ENCODE measurements at regions of chr1 and their contacts with region 1.

Region 1: GRCh38 chr1:173269490-173270230 is 62.5 kb upstream of the TNFSF4 start:
- DNase-seq: peak; percentile 100
- ATAC-seq: peak; percentile 94
- H3K4me3 ChIP-seq: peak overlapping the region; percentile 3; the same call in 1 of the 2 replicates
- H3K27ac ChIP-seq: peak overlapping the region; percentile 62
- H3K4me1 ChIP-seq: peaks cover 46% of the 10 kb centered on the region
- H3K27me3 ChIP-seq: no peaks in the 10 kb centered on the region
- CTCF ChIP-seq: no peak

Region 2: DNA sequence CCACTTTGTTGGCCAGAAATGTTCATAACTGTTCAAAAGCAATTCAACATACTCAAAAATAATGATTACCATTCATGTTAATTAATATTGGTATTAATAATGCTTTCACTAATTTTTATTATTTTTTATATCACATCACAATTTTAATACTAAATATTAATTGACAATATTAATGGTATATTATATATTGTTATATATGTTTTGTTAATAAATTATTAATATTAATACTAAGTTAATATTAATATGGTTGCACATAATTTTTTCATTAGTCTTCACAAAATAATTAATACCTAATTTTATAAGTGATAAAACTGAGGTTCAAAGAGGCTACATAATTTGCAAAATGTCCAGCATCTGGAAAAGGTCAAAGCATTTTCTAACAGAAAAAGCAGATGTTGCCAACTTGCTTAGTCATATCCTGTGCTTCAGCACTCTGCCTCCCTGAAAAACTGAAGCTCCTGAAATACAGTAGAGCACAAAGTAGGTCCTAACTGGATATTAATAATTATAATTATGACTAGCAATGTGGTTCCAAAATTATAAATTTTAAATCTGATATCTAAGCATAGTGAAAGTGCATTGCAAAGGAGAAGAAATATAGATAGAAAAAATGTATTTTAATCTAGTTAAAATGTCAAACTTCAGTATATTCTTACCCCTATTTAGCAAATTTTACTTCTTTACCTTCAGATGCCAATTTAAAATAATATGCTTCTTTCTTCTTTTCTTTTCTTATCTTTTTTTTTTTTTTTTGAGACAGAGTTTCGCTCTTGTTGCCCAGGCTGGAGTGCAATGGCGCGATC is 60.7 kb after region 1 on chr1:
- CTCF ChIA-PET with region 1: no interaction called
- POLR2A ChIA-PET with region 1: no interaction called
- intact Hi-C with region 1: loop called (anchors 1 kb)
- DNase-seq: peak; percentile 94
- ATAC-seq: peak; percentile 52
- H3K4me3 ChIP-seq: no peak overlapping the region
- H3K27ac ChIP-seq: peak overlapping the region; percentile 32; the same call in 1 of the 2 replicates
- H3K4me1 ChIP-seq: peaks cover 26% of the 10 kb centered on the region
- H3K27me3 ChIP-seq: no peaks in the 10 kb centered on the region
- CTCF ChIP-seq: no peak

Region 3: DNA sequence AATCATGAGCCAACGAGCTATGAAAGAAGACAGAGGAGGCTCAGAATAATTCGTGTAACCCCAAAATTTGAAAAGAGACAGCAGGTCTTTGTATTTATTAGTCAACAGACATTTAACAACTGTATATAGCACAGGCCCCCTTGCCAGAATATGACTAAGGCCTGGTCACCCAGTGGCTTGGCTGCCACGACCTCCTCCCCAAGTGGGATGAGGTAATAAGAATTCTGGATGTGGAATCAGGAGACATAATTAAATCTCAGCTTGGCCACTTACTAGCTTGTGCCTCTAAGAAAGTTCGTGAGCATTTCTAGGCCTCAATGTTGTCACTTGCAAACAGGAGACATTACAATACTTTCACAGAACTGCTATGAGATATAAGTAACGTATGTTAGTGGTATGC is 71.6 kb after region 1 on chr1:
- CTCF ChIA-PET with region 1: no interaction called
- POLR2A ChIA-PET with region 1: no interaction called
- intact Hi-C with region 1: loop called (anchors 2 kb)
- DNase-seq: peak; percentile 98
- ATAC-seq: peak; percentile 96
- H3K4me3 ChIP-seq: no peak overlapping the region
- H3K27ac ChIP-seq: peak overlapping the region; percentile 5; the same call in 1 of the 2 replicates
- H3K4me1 ChIP-seq: peaks cover 14% of the 10 kb centered on the region
- H3K27me3 ChIP-seq: no peaks in the 10 kb centered on the region
- CTCF ChIP-seq: no peak

Measured in PC-3 (cell line).